ENCODE measurements at regions of chr1 and their contacts with region 1.

Region 1: DNA sequence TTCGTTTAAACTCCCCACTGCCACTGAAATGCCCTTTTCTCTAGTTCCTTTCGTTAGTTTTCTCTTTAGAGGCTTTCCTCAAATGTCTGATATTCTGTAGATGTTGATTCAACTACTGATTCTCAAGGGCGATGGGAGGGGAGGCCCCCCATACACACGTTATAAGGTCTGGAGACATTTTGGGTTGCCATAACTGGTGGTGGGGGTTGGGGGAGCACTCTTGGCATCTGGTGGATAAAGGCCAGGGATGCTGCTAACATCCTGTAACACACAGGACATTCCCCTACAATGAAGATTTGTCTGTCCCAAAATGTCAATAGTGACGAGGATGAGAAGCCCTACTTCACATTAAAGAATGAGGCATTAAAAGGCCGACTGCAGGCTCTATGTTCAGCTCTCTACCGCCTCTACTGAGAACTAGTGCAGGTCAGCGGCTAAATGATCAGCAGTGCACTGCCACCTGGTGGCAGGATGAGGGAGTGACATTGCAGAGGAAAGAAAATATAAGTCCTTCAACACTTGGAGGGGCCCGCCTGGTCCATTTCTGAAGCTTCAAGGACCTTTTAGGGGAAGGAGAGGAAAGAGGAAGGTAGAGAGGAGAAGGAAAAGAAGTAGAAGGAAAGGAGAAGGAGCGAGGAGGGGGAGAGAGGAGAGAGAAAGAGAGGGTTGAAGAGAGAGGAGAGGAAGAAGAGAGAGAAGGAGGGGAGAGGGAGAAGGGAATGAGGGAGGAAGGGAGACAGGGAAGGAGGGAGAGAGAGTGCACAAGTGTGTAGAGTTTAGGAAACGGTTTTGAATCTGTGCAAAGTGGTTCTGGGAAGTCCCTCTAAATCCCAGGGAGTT is 29.4 kb downstream of the ALG14 start:
- DNase-seq: peak; percentile 89
- ATAC-seq: peak; percentile 85

Region 2: GRCh38 chr1:94522304-94522703 is 521.1 kb before region 1 on chr1:
- intact Hi-C with region 1: loop called (anchors 5 kb)
- DNase-seq: no peak
- ATAC-seq: no peak

Region 3: DNA sequence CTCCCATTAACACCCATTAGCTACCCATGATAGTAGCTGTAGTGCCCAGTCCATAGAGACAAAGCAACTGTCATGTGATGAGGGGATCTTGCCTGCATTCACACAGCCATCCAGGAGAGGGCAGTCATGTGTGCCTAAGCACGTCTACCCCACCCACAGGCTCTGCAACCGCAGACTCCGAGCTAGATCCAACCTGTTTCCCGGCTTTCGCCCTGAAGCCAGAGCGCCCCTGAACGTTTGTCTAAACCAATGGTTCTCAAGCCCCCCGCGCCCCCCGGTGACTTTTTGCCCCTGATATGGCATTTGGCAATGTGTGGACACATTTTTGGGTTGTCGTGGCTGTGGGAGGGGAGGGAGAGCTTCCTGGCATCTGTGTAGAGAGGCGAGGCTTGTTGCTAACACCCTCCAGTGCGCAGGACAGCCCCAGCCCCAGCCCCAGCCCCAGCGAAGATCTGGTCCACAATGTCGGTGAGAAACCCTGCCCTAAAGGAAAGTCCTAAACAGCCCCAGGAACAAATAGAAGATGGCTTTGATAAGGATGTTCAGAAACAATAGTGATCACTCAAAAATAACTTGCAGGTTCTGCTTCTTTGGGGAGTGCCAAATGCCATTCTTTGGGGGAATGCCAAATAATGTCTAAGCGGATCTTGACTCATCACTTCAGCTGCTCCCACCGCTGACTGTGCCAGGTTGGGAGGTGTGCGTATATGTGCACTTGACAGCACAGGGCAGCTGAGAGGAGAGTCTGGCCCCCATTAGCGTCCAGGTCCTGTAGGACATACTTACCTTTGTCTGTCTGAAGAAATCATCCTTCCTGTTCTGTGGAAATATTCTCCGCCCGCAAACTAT is 188.7 kb before region 1 on chr1:
- intact Hi-C with region 1: loop called (anchors 1 kb)
- DNase-seq: peak; percentile 83
- ATAC-seq: peak; percentile 95

Region 4: DNA sequence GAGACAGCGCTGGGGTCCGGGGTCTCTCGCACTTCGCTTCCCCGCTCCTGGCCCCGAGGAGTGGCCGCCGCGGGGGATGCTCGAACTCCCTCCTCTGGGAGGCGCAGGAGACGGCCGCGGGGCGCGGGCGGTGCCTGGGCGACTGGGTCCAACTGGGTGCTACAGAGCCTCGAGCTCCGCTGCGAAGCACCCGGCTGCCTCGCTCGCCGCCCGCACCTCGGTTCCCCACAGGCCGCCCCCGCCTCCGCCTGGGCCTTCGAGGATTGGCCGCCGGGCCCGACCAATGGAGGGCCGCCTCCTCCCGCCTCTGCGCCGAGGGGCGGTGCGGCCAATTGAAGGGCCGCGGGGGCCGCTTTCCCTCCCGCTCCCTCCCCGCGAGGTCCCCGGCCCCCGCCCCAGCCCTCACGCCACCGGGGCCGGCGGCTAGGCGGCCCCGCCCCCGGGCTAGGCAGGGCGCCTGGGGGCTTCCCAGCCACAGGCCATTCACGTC is 116.4 kb before region 1 on chr1 and contains the start of gene CNN3:
- intact Hi-C with region 1: loop called (anchors 2 kb)
- DNase-seq: peak; percentile 94
- ATAC-seq: peak; percentile 95
- total RNA-seq, gene CNN3: 57.0 TPM

Region 5: GRCh38 chr1:94974824-94975223 is 68.5 kb before region 1 on chr1:
- intact Hi-C with region 1: loop called (anchors 5 kb)
- DNase-seq: no peak
- ATAC-seq: no peak

Region 6: DNA sequence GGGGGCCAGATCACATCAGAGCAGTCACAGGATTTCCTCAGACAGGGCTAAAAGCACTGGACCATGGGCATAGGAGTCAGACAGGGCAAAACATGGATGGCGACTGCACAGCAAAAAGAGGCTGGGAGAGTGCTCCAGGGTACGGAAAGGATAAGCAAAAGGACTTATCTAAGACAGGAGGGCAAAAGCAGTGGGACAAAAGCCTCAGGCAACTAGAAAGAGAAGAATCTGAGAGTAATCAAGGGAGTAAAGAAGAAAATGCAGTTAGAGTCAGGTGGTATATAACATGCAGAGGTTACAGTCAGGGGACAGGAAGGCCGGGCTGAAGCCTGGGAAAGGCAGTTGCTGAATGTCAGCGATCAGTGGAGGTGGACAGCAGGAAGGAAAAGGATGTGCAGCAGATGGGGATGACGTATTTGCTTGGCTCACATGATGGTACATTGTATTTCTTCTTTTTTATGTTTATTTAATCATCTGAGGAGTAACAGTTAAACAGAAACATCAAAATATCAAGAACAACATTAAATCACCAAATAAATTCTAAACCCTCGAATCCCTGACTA is 53.4 kb before region 1 on chr1:
- intact Hi-C with region 1: no loop called
- DNase-seq: no peak
- ATAC-seq: no peak